ENCODE measurements at regions of chr3 and their contacts with region 1.

Region 1: GRCh38 chr3:133644768-133645167 is 17.0 kb downstream of the TOPBP1 start:
- DNase-seq: peak; percentile 93
- ATAC-seq: peak; percentile 96
- H3K4me3 ChIP-seq: no peak overlapping the region
- H3K27ac ChIP-seq: no peak overlapping the region
- H3K4me1 ChIP-seq: peaks cover 3% of the 10 kb centered on the region; the same call in 1 of the 2 replicates
- H3K27me3 ChIP-seq: no peaks in the 10 kb centered on the region
- CTCF ChIP-seq: no peak
- POLR2A ChIP-seq: no peak
- RAD21 ChIP-seq: no peak

Region 2: GRCh38 chr3:133258358-133258757 is 386.4 kb before region 1 on chr3:
- CTCF ChIA-PET with region 1: interaction called, 11 read pairs
- POLR2A ChIA-PET with region 1: no interaction called
- dilution Hi-C with region 1: no loop called
- in situ Hi-C with region 1: no loop called
- intact Hi-C with region 1: no loop called
- DNase-seq: peak; percentile 42
- ATAC-seq: no peak
- H3K4me3 ChIP-seq: no peak overlapping the region
- H3K27ac ChIP-seq: no peak overlapping the region
- H3K4me1 ChIP-seq: no peaks in the 10 kb centered on the region
- H3K27me3 ChIP-seq: no peaks in the 10 kb centered on the region; the same call in 1 of the 2 replicates
- CTCF ChIP-seq: no peak
- POLR2A ChIP-seq: no peak
- RAD21 ChIP-seq: no peak

Region 3: DNA sequence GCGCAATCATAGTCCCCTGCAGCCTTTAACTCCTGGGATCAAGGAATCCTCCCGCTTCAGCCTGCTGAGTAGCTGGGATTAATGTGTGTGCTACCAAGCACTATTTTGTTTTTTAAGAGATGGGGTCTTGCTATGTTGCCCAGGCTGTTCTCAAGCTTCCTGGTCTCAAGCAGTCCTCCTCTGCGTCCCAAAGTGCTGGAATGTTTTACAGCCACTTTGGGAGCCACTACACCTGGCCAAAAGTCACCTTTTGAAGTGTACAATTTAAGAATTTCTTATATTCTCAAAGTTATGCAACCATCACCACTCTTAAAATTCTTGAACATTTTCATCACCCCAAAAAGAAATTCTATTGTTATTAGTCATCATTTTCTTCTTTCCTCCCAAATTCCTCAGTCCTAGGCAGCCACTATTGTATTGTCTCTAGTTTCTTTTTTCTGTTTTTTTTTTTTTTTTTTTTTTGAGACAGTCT is 53.5 kb before region 1 on chr3:
- CTCF ChIA-PET with region 1: no interaction called
- POLR2A ChIA-PET with region 1: no interaction called
- dilution Hi-C with region 1: no loop called
- in situ Hi-C with region 1: no loop called
- intact Hi-C with region 1: loop called (anchors 5 kb)
- DNase-seq: peak; percentile 43
- ATAC-seq: peak; percentile 54
- H3K4me3 ChIP-seq: no peak overlapping the region
- H3K27ac ChIP-seq: no peak overlapping the region
- H3K4me1 ChIP-seq: peaks cover 2% of the 10 kb centered on the region; the same call in 1 of the 2 replicates
- H3K27me3 ChIP-seq: no peaks in the 10 kb centered on the region
- CTCF ChIP-seq: no peak
- POLR2A ChIP-seq: no peak
- RAD21 ChIP-seq: no peak

Region 4: GRCh38 chr3:133792171-133792763 is 147.5 kb after region 1 on chr3:
- CTCF ChIA-PET with region 1: no interaction called
- POLR2A ChIA-PET with region 1: no interaction called
- dilution Hi-C with region 1: no loop called
- in situ Hi-C with region 1: no loop called
- intact Hi-C with region 1: no loop called
- DNase-seq: peak; percentile 5
- ATAC-seq: no peak
- H3K4me3 ChIP-seq: no peak overlapping the region
- H3K27ac ChIP-seq: no peak overlapping the region
- H3K4me1 ChIP-seq: no peaks in the 10 kb centered on the region
- H3K27me3 ChIP-seq: no peaks in the 10 kb centered on the region
- CTCF ChIP-seq: no peak
- POLR2A ChIP-seq: no peak
- RAD21 ChIP-seq: no peak

Region 5: GRCh38 chr3:133812872-133813271 is 168.1 kb after region 1 on chr3:
- CTCF ChIA-PET with region 1: no interaction called
- POLR2A ChIA-PET with region 1: no interaction called
- dilution Hi-C with region 1: no loop called
- in situ Hi-C with region 1: no loop called
- intact Hi-C with region 1: no loop called
- DNase-seq: peak; percentile 40
- ATAC-seq: peak; percentile 54
- H3K4me3 ChIP-seq: no peak overlapping the region
- H3K27ac ChIP-seq: no peak overlapping the region
- H3K4me1 ChIP-seq: no peaks in the 10 kb centered on the region
- H3K27me3 ChIP-seq: no peaks in the 10 kb centered on the region
- CTCF ChIP-seq: no peak
- POLR2A ChIP-seq: no peak
- RAD21 ChIP-seq: no peak

Measured in IMR-90 (cell line).